ENCODE measurements at regions of chr4 and their contacts with region 1.

Region 1: GRCh38 chr4:10033191-10033881 is 12.0 kb upstream of the SLC2A9 start:
- DNase-seq: no peak
- ATAC-seq: peak; percentile 68 to 71; a peak in 5 of 6 replicates
- H3K4me3 ChIP-seq: no peak overlapping the region
- H3K27ac ChIP-seq: peak overlapping the region; percentile 67 to 81
- H3K4me1 ChIP-seq: peaks cover 37% of the 10 kb centered on the region
- CTCF ChIP-seq: no peak
- EP300 ChIP-seq: no peak
- POLR2A ChIP-seq: no peak
- RAD21 ChIP-seq: no peak

Region 2: DNA sequence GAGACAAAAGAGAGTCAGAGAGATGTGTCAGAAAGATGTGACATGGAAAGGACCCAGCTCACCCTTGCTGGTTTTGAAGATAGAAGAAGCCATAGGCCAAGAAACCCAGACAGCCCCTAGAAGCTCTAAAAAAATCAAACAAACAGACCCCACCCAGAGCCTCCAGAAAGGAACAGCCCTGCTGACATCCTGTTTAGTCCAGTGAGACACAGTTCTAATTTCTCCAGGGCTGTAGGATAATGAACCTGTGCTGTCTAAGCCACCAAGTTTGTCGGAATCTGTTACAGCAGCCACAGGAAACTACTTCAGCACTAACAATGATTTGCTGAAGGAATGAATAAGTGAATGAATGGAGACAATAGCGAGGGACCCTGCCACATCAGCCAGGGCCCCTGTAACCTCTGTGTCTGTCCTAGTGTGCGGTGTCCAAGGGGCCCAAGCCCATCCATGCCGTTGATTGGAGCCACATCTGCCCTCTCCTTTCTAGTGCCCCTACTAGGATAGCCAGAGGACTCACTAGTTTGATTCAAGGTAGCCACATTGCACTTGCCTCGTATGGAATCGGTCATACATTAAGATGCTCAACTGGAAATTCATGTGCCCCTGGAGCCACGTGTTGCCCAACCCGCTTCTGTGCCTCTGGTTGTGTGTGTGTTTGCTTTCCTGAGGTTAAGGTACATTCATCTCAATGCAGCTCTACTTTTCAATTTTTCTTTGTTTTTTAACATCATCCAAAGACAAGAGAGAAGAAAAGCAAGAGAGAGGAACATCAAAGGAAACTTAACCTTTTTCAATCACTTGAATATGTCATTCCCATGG is 20.5 kb after region 1 on chr4:
- CTCF ChIA-PET with region 1: interaction called, 3 read pairs
- POLR2A ChIA-PET with region 1: interaction called, 12 read pairs
- DNase-seq: no peak
- ATAC-seq: no peak
- H3K4me3 ChIP-seq: no peak overlapping the region
- H3K27ac ChIP-seq: no peak overlapping the region
- H3K4me1 ChIP-seq: no peaks in the 10 kb centered on the region
- CTCF ChIP-seq: no peak
- EP300 ChIP-seq: no peak
- POLR2A ChIP-seq: no peak
- RAD21 ChIP-seq: no peak

Region 3: DNA sequence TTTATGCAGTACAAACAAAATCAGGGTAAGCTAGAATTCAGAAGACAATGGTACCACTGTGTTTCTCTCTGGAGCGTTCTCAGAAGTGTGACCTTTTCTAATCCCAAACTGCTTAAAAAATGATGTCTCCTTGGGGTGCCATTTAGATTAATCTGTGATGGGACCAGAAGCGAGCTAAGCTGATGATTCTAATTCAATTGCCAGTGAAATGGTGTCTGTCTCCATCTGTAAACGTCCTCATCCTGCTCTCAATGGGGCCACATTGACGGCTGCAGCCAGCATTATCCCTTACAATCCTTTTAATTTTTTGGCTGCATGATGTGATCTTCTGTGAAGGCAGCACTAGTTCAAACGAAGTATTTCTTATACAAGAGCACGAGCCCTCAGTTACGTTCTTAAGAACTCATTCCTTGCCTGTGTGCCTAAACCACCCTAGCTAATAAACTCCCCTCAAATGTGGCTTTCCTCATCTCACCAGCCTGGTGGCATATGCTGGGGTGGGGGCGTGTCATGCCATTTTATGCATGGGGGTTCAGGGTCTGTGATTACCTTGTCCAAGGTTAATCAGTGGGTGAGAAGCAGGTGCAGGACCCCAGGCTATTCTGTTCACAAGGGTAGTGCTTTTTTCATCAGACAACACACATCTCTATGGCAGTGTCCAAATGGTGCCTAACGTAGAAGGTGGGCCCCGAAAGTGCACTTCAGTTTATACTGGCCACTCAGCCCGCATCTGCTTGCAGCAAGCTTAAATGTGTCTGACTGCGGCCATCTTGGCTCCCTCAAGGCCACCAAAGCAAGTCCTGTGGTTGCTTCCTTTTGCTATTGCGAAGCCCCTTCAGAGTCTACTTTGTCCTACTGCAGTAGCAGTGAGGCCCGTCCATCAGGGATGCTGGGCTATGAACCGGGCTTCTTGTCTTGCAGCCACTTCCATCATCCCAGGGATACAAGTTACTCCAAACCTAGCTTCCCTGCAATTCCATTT is 33.6 kb after region 1 on chr4:
- CTCF ChIA-PET with region 1: no interaction called
- POLR2A ChIA-PET with region 1: no interaction called
- DNase-seq: no peak
- ATAC-seq: no peak
- H3K4me3 ChIP-seq: no peak overlapping the region
- H3K27ac ChIP-seq: no peak overlapping the region
- H3K4me1 ChIP-seq: no peaks in the 10 kb centered on the region
- CTCF ChIP-seq: no peak
- EP300 ChIP-seq: no peak
- POLR2A ChIP-seq: no peak
- RAD21 ChIP-seq: no peak